ENCODE measurements at regions of chr1 and their contacts with region 1.

Region 1: DNA sequence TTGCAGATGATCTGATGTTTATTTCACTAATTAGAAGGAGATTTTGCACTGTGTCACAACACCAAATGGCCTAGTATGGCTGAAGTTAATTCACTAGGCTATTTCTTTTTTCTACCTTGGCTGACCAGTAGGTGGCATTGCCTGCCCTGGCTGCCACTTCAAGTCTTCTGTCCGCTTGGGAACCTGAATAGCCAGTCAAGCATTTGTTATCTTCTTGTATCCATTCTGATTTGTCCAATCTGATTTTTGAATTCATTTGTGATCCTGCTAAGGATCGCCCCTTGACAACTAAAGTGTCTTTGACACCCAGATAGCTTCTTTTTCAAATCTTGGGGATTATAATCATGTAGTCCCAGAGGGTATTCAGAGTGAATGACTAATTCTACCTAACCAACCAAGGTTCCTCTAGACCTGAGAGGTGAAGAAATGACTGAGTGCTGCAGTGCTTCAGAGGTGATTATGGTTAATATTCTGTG is 99.4 kb downstream of the GIPC2 start:
- DNase-seq: peak; percentile 67
- H3K4me3 Mint-ChIP-seq: no peak overlapping the region
- H3K27ac Mint-ChIP-seq: no peak overlapping the region
- H3K4me1 Mint-ChIP-seq: peaks cover 20% of the 10 kb centered on the region
- H3K27me3 Mint-ChIP-seq: no peaks in the 10 kb centered on the region
- CTCF ChIP-seq: peak; percentile 83

Region 2: GRCh38 chr1:78237364-78237916 is 92.3 kb after region 1 on chr1:
- CTCF ChIA-PET with region 1: no interaction called
- intact Hi-C with region 1: loop called (anchors 5 kb)
- DNase-seq: peak; percentile 75
- H3K4me3 Mint-ChIP-seq: peak overlapping the region; percentile 31
- H3K27ac Mint-ChIP-seq: peak overlapping the region; percentile 69
- H3K4me1 Mint-ChIP-seq: peaks cover 29% of the 10 kb centered on the region
- H3K27me3 Mint-ChIP-seq: no peaks in the 10 kb centered on the region
- CTCF ChIP-seq: no peak

Region 3: DNA sequence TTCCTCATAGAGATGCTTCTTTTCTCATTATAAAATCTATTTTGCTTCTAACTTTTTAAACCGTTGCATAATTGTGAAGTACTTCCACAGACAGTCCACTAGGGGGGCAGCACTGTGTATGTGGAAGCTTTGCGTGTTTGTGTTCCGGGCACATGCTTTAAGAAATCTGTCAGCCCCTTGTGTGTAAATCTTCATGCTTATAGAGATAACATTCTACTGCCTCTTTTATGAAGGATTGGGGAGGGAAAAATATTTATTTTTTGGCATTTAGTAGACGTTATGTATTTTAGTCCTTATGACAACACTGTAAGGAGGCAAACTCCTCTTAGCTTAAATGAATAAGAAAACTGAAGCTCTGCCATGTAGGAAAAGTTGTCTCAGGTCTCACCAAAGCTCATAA is 188.4 kb after region 1 on chr1:
- CTCF ChIA-PET with region 1: no interaction called
- intact Hi-C with region 1: loop called (anchors 10 kb)
- DNase-seq: peak; percentile 35
- H3K4me3 Mint-ChIP-seq: no peak overlapping the region
- H3K27ac Mint-ChIP-seq: no peak overlapping the region
- H3K4me1 Mint-ChIP-seq: no peaks in the 10 kb centered on the region
- H3K27me3 Mint-ChIP-seq: no peaks in the 10 kb centered on the region
- CTCF ChIP-seq: peak; percentile 76

Region 4: GRCh38 chr1:78472851-78473496 is 327.8 kb after region 1 on chr1:
- CTCF ChIA-PET with region 1: no interaction called
- intact Hi-C with region 1: loop called (anchors 5 kb)
- DNase-seq: no peak
- H3K4me3 Mint-ChIP-seq: no peak overlapping the region
- H3K27ac Mint-ChIP-seq: no peak overlapping the region
- H3K4me1 Mint-ChIP-seq: peaks cover 39% of the 10 kb centered on the region
- H3K27me3 Mint-ChIP-seq: no peaks in the 10 kb centered on the region
- CTCF ChIP-seq: no peak

Region 5: DNA sequence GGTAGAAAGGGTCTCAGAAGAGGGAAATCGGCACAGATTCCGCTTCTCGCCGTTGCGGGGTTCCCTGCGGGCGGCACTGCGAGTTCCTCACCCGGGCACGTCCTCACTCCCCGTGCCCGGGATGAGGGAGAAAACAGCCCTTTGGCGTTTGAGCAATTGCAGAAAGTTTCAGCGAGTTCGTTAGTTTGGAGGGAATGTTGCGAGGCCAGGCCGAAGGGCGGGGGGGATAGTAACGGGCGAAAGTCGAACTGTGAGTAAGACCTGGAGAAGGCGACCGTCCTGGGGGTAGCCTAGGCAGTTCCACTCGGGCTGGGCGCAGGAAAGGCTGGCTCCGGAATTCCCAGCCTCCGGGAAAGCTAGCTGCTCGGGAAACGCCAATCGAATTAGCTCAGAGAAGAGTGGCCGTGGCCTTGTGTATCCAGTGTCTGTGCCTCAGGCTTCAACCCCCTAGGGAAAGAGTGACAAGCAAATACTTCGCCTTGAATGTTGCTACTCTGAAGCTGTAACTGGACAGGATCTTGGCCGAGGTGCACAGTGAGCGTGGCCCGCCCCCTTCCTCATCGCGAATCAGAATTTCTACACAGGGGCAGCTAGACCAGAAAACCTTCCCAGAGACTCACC is 346.4 kb after region 1 on chr1:
- CTCF ChIA-PET with region 1: no interaction called
- intact Hi-C with region 1: loop called (anchors 5 kb)
- DNase-seq: peak; percentile 31
- H3K4me3 Mint-ChIP-seq: peak overlapping the region; percentile 91
- H3K27ac Mint-ChIP-seq: no peak overlapping the region
- H3K4me1 Mint-ChIP-seq: peaks cover 27% of the 10 kb centered on the region
- H3K27me3 Mint-ChIP-seq: no peaks in the 10 kb centered on the region
- CTCF ChIP-seq: no peak

Region 6: GRCh38 chr1:78533527-78533926 is 388.4 kb after region 1 on chr1:
- CTCF ChIA-PET with region 1: no interaction called
- intact Hi-C with region 1: loop called (anchors 1 kb)
- DNase-seq: no peak
- H3K4me3 Mint-ChIP-seq: no peak overlapping the region
- H3K27ac Mint-ChIP-seq: no peak overlapping the region
- H3K4me1 Mint-ChIP-seq: no peaks in the 10 kb centered on the region
- H3K27me3 Mint-ChIP-seq: no peaks in the 10 kb centered on the region
- CTCF ChIP-seq: no peak

Region 7: DNA sequence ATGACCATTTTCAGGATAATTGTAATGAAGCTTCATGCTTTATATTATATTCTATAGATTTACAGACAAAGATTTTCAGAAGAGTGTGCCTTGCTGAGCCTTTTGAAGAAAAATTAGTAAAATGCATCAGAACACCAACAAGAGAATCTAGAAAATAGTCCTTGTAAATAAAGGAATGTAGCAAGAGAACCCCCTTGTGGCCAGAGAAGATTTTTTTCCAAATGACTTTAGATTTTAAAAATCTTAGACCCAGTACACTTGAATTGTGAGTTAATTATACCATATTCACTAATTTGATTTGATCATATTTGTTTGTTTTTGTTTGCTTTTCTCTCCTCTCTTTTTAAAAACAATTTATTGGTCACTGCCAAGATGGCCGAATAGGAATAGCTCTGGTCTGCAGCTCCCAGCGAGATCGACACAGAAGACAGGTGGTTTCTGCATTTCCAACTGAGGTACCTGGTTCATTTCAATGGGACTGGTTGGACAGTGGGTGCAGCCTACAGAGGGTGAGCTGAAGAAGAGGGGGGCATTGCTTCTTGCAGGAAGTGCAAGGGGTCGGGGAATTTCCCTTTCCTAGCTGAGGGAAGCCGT is 462.3 kb after region 1 on chr1:
- CTCF ChIA-PET with region 1: interaction called, 7 read pairs
- intact Hi-C with region 1: loop called (anchors 1 kb)
- DNase-seq: no peak
- H3K4me3 Mint-ChIP-seq: no peak overlapping the region
- H3K27ac Mint-ChIP-seq: no peak overlapping the region
- H3K4me1 Mint-ChIP-seq: no peaks in the 10 kb centered on the region
- H3K27me3 Mint-ChIP-seq: no peaks in the 10 kb centered on the region
- CTCF ChIP-seq: no peak

Measured in Calu3 (cell line).